ENCODE measurements at regions of chr1 and their contacts with region 1.

Region 1: DNA sequence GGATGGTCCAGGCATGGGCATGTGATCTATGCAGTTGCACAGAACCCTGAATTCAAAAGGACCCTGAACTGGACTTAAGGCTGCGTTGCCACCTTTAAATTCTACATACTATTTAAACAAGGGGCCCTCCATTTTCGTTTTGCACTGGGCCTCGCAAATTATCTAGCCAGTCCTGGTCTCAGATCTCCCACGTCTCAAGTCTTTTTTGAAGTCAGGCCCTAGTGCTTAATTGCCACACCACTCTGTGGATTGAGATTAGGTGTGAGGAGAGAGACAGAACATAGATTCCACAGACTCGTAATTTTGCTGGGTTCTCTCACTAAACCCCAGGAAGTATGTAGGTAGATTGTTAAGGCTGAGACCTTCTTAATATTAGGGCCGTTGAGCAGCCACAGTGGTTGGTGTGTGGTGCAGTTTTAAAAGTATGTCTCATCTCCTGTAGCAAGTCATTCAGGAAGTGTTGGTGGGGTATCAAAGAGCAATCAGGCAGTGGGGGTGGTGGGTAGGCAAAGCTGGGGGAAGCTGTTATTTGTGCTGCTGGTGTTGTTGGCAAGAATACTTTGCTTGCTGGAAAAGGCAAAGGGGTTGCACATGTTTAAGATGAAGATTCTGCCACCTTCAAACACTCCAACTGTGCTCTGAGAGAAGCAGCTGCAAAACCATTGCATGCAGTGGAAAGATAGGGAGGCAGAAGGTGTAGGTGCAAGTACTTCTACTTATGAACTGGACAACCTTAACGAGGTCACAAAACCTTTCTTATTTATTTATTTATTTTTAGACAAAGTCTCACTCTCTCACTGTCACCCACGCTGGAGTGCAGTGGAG is 11.2 kb downstream of the CD84 start:
- DNase-seq: peak; percentile 50
- H3K4me3 Mint-ChIP-seq: peak overlapping the region; percentile 60
- H3K27ac Mint-ChIP-seq: peak overlapping the region; percentile 95
- H3K4me1 Mint-ChIP-seq: peaks cover 83% of the 10 kb centered on the region
- H3K27me3 Mint-ChIP-seq: no peaks in the 10 kb centered on the region

Region 2: GRCh38 chr1:160428655-160429054 is 139.4 kb before region 1 on chr1:
- intact Hi-C with region 1: loop called (anchors 1 kb)
- DNase-seq: peak; percentile 15
- H3K4me3 Mint-ChIP-seq: no peak overlapping the region
- H3K27ac Mint-ChIP-seq: peak overlapping the region; percentile 91
- H3K4me1 Mint-ChIP-seq: peaks cover 59% of the 10 kb centered on the region
- H3K27me3 Mint-ChIP-seq: no peaks in the 10 kb centered on the region

Region 3: DNA sequence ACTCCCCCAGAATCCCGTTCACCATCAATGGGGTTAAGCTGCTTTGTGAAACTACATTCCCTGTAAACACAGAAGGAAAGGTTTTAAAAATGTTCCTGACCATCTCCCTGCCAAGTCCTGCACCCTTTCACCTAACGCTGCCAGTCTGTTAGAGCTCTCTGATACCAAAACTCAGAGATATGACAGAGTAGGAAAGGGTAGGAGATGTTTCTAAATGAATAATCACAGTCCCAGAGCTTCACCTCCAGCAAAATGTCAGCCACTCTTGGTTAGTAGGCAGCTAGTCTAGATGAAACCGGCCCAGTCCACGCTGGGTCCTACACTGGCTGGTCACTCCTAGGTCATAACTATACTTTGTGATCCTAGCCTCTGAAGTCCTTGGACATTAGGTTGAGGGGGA is 71.7 kb before region 1 on chr1:
- intact Hi-C with region 1: loop called (anchors 2 kb)
- DNase-seq: no peak
- H3K4me3 Mint-ChIP-seq: no peak overlapping the region
- H3K27ac Mint-ChIP-seq: no peak overlapping the region
- H3K4me1 Mint-ChIP-seq: peaks cover 22% of the 10 kb centered on the region
- H3K27me3 Mint-ChIP-seq: no peaks in the 10 kb centered on the region

Region 4: GRCh38 chr1:160618763-160619274 is 50.7 kb after region 1 on chr1:
- intact Hi-C with region 1: loop called (anchors 2 kb)
- DNase-seq: no peak
- H3K4me3 Mint-ChIP-seq: peak overlapping the region; percentile 24
- H3K27ac Mint-ChIP-seq: peak overlapping the region; percentile 51
- H3K4me1 Mint-ChIP-seq: peaks cover 76% of the 10 kb centered on the region
- H3K27me3 Mint-ChIP-seq: no peaks in the 10 kb centered on the region

Measured in activated T-helper 1 cell treated with anti-CD3 and anti-CD28 coated beads, Interleukin-12 subunit alpha, Interleukin-12 subunit beta, Interleukin-2, Interleukin-4 antibody, amounts not matched to agents 30 ng/mL and 10 ng/mL and 1 ng/mL, durations not matched to agents 14 hours and 24 hours and 36 hours (primary cell).